ENCODE measurements at regions of chr1 and their contacts with region 1.

Region 1: DNA sequence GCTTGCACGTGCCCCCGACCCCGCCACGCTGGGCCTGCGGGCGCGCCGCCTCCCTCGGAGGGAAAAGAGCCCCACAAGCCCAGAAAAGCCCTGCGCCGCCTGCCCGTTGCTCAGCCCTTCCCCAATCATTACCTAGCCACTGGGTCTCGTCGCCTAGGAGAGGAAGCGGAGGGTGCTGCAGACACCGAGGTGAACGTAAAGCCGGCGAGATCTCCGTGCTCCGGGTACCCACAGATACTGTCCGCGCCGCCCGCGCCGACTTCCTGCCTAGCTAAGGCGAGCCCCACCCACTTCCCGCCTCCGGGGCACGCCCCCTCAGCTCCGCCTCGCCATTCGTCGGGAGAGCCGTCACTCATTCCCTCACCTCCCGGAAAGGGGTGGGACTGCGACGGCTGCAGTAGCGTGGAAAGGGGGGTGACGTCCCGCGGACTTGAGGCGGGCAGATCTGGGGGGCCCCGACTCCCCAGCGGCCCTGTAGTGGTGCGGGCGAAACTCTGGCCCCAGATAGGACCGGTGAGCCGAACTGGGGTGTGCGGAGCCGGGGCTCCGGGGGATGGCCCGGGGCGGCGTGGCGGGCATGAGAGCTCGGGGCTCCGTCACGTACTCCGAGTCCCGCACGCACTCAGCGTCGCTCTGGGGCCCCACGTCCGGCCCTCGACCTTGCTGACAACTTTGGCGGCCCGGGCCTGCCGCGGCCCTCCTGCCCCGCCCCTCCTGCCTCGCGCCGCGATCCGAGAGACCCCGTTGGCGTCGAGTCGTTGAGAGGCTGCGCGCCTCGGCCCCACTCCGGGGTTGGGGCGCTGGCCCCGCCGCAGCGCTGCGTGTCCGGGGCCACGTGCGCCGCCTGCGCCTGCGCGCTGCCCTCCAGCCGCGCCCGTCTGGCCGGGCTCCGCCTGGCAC is at the start of gene ENO1:
- DNase-seq: peak; percentile 99
- ATAC-seq: peak; percentile 75
- H3K4me3 Mint-ChIP-seq: peak within 1 kb of the TSS; percentile 97
- H3K27ac Mint-ChIP-seq: peak within 1 kb of the TSS; percentile 97
- H3K4me1 Mint-ChIP-seq: peaks cover 42% of the 10 kb centered on the region
- H3K27me3 Mint-ChIP-seq: no peaks in the 10 kb centered on the region
- total RNA-seq, gene ENO1: 2,070 to 2,300 TPM

Region 2: DNA sequence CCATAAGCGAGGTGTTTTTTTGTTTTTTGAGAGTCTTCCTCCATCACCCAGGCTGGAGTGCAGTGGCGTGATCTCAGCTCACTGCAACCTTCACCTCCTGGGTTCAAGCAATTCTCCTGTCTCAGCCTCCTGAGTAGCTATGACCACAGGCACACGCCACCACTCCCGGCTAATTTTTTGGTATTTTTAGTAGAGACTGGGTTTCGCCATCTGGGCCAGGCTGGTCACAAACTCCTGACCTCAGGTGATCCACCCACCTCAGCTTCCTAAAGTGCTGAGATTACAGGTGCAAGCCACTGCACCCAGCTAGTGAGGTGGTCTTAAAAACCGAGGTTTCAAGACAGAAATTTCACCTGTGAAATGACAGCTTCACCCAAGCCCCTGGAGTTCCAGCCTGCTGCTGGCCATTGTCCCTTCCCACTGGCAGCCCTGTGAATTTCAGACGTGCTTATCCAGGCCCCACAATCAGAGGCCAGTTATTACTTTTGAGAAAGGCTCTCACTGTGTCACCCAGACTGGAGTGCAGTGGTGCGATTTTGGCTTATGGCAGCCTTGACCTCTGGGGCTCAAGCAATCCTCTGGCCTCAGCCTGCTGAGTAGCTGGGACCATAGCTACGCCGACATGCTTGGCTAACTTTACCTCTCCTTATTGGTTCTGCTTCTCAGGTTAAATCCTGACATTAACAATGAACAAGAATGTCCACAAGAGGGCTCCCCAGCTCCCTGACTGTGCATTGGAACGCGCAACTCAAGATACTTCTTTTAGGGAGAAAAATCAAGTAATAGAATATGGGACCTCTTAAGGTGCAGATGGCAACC is 19.6 kb before region 1 on chr1:
- CTCF ChIA-PET with region 1: interaction called, 54 read pairs
- DNase-seq: peak; percentile 68
- ATAC-seq: peak; percentile 48
- H3K4me3 Mint-ChIP-seq: peak overlapping the region; percentile 32
- H3K27ac Mint-ChIP-seq: peak overlapping the region; percentile 90
- H3K4me1 Mint-ChIP-seq: peaks cover 60% of the 10 kb centered on the region
- H3K27me3 Mint-ChIP-seq: no peaks in the 10 kb centered on the region

Region 3: DNA sequence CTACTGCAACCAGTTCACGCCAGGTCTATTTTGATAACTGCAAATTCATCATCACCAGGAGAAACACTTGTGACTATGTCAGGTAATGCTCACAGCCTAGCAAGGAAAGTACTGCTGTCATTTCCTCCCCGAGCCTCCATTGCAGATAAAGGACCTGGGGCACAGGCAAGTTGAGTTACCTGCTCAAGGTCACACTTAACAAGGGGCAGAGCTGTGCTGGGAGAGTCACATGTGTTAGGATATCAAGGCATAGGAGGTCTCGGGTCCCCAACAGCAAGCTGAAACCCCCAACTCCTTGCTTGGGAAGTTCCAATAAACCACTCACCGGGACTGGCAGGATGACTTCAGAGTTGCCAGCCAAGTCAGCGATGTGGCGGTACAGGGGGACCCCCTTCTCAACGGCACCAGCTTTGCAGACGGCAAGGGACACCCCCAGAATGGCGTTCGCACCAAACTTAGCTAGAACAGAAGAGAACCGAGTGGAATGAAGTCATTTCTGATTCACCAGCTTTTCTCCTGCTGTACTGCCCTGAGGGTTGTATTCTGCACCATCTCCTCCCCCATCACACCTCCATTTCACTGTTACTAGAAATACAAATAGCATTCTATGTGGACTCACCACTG is 11.8 kb before region 1 on chr1:
- CTCF ChIA-PET with region 1: interaction called, 54 read pairs
- DNase-seq: no peak
- ATAC-seq: no peak
- H3K4me3 Mint-ChIP-seq: no peak overlapping the region
- H3K27ac Mint-ChIP-seq: peak overlapping the region; percentile 60
- H3K4me1 Mint-ChIP-seq: peaks cover 89% of the 10 kb centered on the region
- H3K27me3 Mint-ChIP-seq: no peaks in the 10 kb centered on the region

Region 4: DNA sequence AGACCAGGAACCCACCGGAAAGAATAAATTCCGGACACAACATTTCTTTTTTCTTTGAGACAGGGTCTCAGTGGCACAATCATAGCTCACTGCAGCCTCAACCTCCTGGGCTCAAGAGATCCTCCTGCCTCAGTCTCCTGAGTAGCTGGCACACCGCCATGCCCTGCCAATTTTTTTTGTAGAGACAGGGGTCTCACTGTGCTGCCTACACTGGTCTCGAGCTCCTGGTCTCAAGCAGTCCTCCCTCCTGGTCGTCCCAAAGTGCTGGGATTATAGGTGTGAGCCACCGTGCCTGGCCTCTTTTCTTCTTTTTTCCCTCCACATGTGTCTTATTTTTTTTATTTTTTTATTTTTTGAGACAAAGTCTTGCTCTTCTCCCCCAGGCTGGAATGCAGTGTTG is 20.4 kb after region 1 on chr1:
- CTCF ChIA-PET with region 1: interaction called, 16 read pairs
- DNase-seq: no peak
- ATAC-seq: no peak
- H3K4me3 Mint-ChIP-seq: no peak overlapping the region
- H3K27ac Mint-ChIP-seq: peak overlapping the region; percentile 96
- H3K4me1 Mint-ChIP-seq: peaks cover 41% of the 10 kb centered on the region
- H3K27me3 Mint-ChIP-seq: no peaks in the 10 kb centered on the region